ENCODE measurements at regions of chr16 and their contacts with region 1.

Region 1: GRCh38 chr16:82936941-82937551 is 310.3 kb downstream of the CDH13 start:
- DNase-seq: peak; percentile 24 to 37
- ATAC-seq: peak; percentile 86 to 93 (median 90)
- H3K4me3 ChIP-seq: no peak overlapping the region
- H3K4me3 Mint-ChIP-seq: peak overlapping the region; percentile 62
- H3K27ac ChIP-seq: peak overlapping the region; percentile 73
- H3K27ac Mint-ChIP-seq: peak overlapping the region; percentile 80 to 84
- H3K4me1 ChIP-seq: peaks cover 21% of the 10 kb centered on the region
- H3K4me1 Mint-ChIP-seq: peaks cover 52 to 53% of the 10 kb centered on the region in 2 donors
- H3K27me3 ChIP-seq: no peaks in the 10 kb centered on the region
- H3K27me3 Mint-ChIP-seq: no peaks in the 10 kb centered on the region
- CTCF ChIP-seq: no peak

Region 2: GRCh38 chr16:82653550-82654511 is 283.2 kb before region 1 on chr16:
- intact Hi-C with region 1: loop called (anchors 5 kb)
- DNase-seq: peak in 1 of 2 donors; percentile 85
- ATAC-seq: peak; percentile 65 to 80 (median 72)
- H3K4me3 ChIP-seq: no peak overlapping the region
- H3K4me3 Mint-ChIP-seq: peak overlapping the region; percentile 29
- H3K27ac ChIP-seq: peak overlapping the region; percentile 59
- H3K27ac Mint-ChIP-seq: peak overlapping the region; percentile 71 to 92
- H3K4me1 ChIP-seq: peaks cover 51% of the 10 kb centered on the region
- H3K4me1 Mint-ChIP-seq: peaks cover 33 to 43% of the 10 kb centered on the region in 2 donors
- H3K27me3 ChIP-seq: no peaks in the 10 kb centered on the region
- H3K27me3 Mint-ChIP-seq: peaks cover 0 to 5% of the 10 kb centered on the region in 2 donors
- CTCF ChIP-seq: no peak

Region 3: GRCh38 chr16:82728901-82729300 is 208.1 kb before region 1 on chr16:
- intact Hi-C with region 1: no loop called
- DNase-seq: no peak
- ATAC-seq: no peak
- H3K4me3 ChIP-seq: no peak overlapping the region
- H3K4me3 Mint-ChIP-seq: no peak overlapping the region
- H3K27ac ChIP-seq: no peak overlapping the region
- H3K27ac Mint-ChIP-seq: no peak overlapping the region
- H3K4me1 ChIP-seq: no peaks in the 10 kb centered on the region
- H3K4me1 Mint-ChIP-seq: peaks cover 0 to 7% of the 10 kb centered on the region in 2 donors
- H3K27me3 ChIP-seq: no peaks in the 10 kb centered on the region
- H3K27me3 Mint-ChIP-seq: peaks cover 10 to 19% of the 10 kb centered on the region in 2 donors
- CTCF ChIP-seq: no peak

Region 4: DNA sequence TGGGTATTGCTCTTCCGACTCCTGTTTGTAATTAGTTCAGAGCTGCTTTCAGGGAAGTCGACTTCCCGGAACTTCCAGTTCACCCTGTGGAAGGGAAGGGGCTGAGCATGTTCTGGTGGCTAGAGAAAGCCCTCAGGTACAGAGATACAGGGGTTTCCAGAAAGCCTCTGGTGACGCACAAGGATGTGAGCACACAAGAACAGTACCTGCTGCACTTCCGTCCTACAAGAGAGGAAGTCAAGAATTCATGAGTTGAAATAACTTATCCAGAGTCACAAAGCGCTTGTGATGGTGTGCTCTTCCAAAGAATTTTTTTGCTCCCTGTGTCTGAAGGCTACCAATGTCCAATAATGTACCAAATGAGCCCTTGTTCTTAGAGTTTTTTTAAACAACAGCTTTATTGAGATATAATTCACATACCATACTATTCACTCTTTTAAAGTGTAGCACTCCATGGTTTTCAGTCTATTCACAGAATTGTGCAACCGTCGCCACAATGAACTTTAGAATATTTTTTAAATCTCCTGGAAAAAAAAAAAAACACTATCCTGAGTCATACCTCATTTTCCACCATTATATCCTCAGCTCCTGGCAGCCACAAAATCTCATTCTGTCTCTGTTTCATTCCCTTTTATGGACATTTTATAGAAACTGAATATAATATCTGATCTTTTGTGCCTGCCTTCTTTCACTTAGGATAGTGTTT is 17.3 kb after region 1 on chr16:
- intact Hi-C with region 1: loop called (anchors 1 kb)
- DNase-seq: no peak
- ATAC-seq: no peak
- H3K4me3 ChIP-seq: no peak overlapping the region
- H3K4me3 Mint-ChIP-seq: no peak overlapping the region
- H3K27ac ChIP-seq: no peak overlapping the region
- H3K27ac Mint-ChIP-seq: no peak overlapping the region
- H3K4me1 ChIP-seq: peaks cover 26% of the 10 kb centered on the region
- H3K4me1 Mint-ChIP-seq: peaks cover 58 to 69% of the 10 kb centered on the region in 2 donors
- H3K27me3 ChIP-seq: no peaks in the 10 kb centered on the region
- H3K27me3 Mint-ChIP-seq: peaks cover 0 to 3% of the 10 kb centered on the region in 2 donors
- CTCF ChIP-seq: no peak